Activated CD8-positive, alpha-beta T cell treated with anti-CD3 and anti-CD28 coated beads, Interleukin-2, amount 10 ng/mL, durations not matched to agents 7 days and 5 days (primary cell): ENCODE measurements at regions of chr15 and their contacts with region 1.

Region 1: DNA sequence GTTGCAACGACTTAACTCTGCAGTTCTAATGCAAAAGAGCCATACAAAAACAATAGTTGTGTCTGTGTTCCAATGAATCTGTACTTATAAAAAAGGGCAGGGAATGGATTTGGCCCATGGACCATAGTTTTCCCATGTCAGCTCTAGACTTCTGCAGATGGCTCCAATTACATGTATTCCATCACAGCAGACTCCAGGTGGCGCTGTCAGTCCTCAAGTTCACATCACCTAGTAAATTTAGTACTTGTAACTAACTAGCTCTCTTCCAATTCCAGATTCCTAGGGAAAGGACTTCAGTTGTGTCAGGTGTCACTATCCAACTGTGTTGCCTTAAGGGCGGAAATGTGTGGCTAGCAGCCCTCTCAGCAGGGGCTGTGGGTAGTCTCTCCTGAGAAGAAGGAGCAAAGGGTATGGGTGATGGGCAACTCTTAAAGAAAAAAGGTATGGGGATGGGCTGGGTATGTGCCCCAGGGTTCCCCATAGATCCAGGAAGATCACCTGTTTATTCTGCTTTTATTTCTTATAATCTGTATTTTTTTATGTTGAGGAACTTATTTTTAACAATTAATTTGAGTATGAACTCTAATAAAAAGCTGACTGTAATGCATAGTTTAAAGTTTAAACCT is 36.2 kb downstream of the BBS4 start:
- DNase-seq: peak; percentile 79
- ATAC-seq: peak; percentile 36
- H3K4me3 Mint-ChIP-seq: no peak overlapping the region
- H3K27ac Mint-ChIP-seq: no peak overlapping the region
- H3K4me1 Mint-ChIP-seq: peaks cover 2% of the 10 kb centered on the region
- H3K27me3 Mint-ChIP-seq: no peaks in the 10 kb centered on the region

Region 2: GRCh38 chr15:72540606-72541237 is 181.5 kb before region 1 on chr15:
- CTCF ChIA-PET with region 1: no interaction called
- POLR2A ChIA-PET with region 1: no interaction called
- DNase-seq: no peak
- ATAC-seq: no peak
- H3K4me3 Mint-ChIP-seq: no peak overlapping the region
- H3K27ac Mint-ChIP-seq: no peak overlapping the region
- H3K4me1 Mint-ChIP-seq: peaks cover 6% of the 10 kb centered on the region
- H3K27me3 Mint-ChIP-seq: no peaks in the 10 kb centered on the region

Region 3: DNA sequence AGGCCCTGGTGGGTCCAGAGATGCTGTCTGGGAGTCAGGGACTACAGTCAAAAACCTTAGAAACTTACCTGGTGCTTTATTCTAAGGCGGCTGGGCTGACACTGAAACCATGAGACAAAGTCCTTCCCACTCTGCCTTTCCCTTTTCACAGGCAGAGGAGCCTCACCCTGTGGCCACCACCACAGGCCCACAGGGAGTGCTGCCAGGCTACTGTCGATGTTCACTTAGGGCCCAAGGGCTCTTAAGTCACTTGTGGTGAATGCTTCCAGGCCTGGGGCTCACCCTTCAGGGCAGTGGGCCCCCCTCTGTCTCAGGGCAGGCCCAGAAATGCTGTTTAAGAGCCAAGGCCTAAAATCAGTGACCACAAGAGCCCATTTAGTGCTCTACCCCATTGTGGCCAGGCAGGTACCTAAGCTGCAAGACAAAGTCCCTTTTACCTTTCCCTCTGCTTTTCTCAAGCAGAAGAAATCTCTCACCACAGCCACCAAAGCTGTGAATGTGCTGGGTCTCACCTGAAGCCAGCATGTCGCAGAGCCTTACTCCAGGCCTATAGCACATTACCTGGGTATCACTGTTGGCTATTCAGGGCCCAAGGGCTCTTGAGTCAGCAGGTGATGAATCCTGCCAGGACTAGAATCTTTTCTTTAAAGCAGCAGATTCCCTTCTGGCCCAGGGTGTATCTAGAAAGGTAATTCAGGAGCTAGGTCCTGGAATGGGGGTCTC is 107.2 kb before region 1 on chr15:
- CTCF ChIA-PET with region 1: no interaction called
- POLR2A ChIA-PET with region 1: no interaction called
- DNase-seq: no peak
- ATAC-seq: no peak
- H3K4me3 Mint-ChIP-seq: no peak overlapping the region
- H3K27ac Mint-ChIP-seq: no peak overlapping the region
- H3K4me1 Mint-ChIP-seq: peaks cover 10% of the 10 kb centered on the region
- H3K27me3 Mint-ChIP-seq: no peaks in the 10 kb centered on the region

Region 4: GRCh38 chr15:72706266-72706665 is 15.9 kb before region 1 on chr15:
- CTCF ChIA-PET with region 1: interaction called, 13 read pairs
- POLR2A ChIA-PET with region 1: no interaction called
- DNase-seq: no peak
- ATAC-seq: no peak
- H3K4me3 Mint-ChIP-seq: no peak overlapping the region
- H3K27ac Mint-ChIP-seq: no peak overlapping the region
- H3K4me1 Mint-ChIP-seq: no peaks in the 10 kb centered on the region
- H3K27me3 Mint-ChIP-seq: no peaks in the 10 kb centered on the region

Region 5: DNA sequence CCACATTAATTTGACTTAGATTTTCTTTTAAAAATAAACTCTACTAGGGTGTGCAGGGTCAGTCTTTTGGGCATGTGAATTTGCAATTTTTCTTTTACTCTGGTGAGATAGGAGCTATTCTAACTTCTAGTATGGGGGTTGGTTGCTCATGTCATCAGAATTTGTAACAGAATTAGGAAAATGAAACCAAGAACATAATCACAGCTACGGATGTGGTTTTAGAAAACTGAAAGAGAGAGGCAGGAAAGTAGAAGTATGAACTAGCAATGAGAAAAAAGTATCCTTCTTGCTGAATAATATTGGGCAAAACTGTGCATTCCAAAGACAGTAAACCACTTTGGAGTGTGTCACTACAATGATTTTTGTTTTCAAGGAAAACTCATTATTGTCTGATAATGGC is 18.0 kb after region 1 on chr15:
- CTCF ChIA-PET with region 1: interaction called, 29 read pairs
- POLR2A ChIA-PET with region 1: no interaction called
- DNase-seq: no peak
- ATAC-seq: peak; percentile 76
- H3K4me3 Mint-ChIP-seq: peak overlapping the region; percentile 56
- H3K27ac Mint-ChIP-seq: peak overlapping the region; percentile 83
- H3K4me1 Mint-ChIP-seq: peaks cover 35% of the 10 kb centered on the region
- H3K27me3 Mint-ChIP-seq: no peaks in the 10 kb centered on the region

Region 6: DNA sequence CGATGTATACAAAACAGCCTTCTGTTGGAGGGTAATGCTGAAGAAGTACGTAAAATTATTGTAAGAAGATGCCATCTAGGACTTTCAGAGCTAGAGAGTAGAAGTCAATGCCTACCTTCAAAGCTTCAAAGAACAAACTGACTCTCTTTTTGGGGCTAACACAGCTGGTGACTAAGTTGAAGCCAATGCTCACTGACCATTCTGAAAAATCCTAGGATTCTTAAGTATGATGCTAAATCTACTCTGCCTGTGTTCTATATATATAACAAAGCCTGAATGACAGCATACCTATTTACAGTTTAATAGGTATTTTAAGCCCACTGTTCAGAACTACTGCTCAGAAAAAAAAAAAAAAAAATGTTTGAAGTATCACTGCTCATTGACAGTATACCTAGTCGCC is 42.5 kb after region 1 on chr15:
- CTCF ChIA-PET with region 1: interaction called, 16 read pairs
- POLR2A ChIA-PET with region 1: no interaction called
- DNase-seq: no peak
- ATAC-seq: no peak
- H3K4me3 Mint-ChIP-seq: no peak overlapping the region
- H3K27ac Mint-ChIP-seq: no peak overlapping the region
- H3K4me1 Mint-ChIP-seq: peaks cover 8% of the 10 kb centered on the region
- H3K27me3 Mint-ChIP-seq: no peaks in the 10 kb centered on the region

Region 7: GRCh38 chr15:72783563-72784237 is 61.5 kb after region 1 on chr15 and contains the start of gene ADPGK:
- CTCF ChIA-PET with region 1: interaction called, 21 read pairs
- POLR2A ChIA-PET with region 1: interaction called, 4 read pairs
- DNase-seq: peak; percentile 93
- ATAC-seq: peak; percentile 85
- H3K4me3 Mint-ChIP-seq: peak within 1 kb of the TSS; percentile 86
- H3K27ac Mint-ChIP-seq: peak within 1 kb of the TSS; percentile 95
- H3K4me1 Mint-ChIP-seq: peaks cover 56% of the 10 kb centered on the region
- H3K27me3 Mint-ChIP-seq: no peaks in the 10 kb centered on the region
- total RNA-seq, gene ADPGK: 69.3 to 76.2 TPM

Region 8: GRCh38 chr15:73081321-73081958 is 359.3 kb after region 1 on chr15:
- CTCF ChIA-PET with region 1: interaction called, 26 read pairs
- POLR2A ChIA-PET with region 1: interaction called, 3 read pairs
- DNase-seq: peak; percentile 22
- ATAC-seq: no peak
- H3K4me3 Mint-ChIP-seq: no peak overlapping the region
- H3K27ac Mint-ChIP-seq: no peak overlapping the region
- H3K4me1 Mint-ChIP-seq: no peaks in the 10 kb centered on the region
- H3K27me3 Mint-ChIP-seq: peaks cover 6% of the 10 kb centered on the region